Common myeloid progenitor, CD34-positive (primary cell): ENCODE measurements at regions of chr10 and their contacts with region 1.

Region 1: GRCh38 chr10:73625884-73626752 is 15.2 kb downstream of the MYOZ1 start:
- DNase-seq: peak; percentile 99
- H3K4me3 ChIP-seq: peak overlapping the region; percentile 68 to 98 (median 92)
- H3K27ac ChIP-seq: peak overlapping the region; percentile 96 to 99
- H3K4me1 ChIP-seq: peaks cover 8 to 18% (median 13%) of the 10 kb centered on the region in 4 experiments
- H3K27me3 ChIP-seq: no peaks in the 10 kb centered on the region

Region 2: DNA sequence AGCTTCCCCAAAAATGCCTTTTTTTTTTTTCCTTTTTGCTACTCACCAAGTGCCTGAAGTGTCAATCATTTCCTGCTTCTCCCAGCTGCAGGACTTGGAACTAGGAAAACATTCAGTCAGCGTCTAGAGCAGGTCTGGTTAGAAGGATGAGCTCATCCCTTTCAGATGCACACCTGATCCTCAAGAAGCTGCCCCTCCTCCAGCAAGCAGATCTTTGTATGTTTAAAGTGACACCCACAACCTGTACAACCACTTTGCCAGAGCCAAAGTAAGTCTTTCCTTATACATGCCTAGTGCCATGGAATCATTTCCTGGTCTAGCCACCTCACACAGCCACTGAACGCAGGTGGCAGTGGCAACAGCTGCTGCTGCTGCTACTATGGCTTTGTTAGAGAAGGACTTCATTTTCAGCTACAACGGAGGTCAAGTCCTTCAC is 24.6 kb before region 1 on chr10:
- CTCF ChIA-PET with region 1: no interaction called
- POLR2A ChIA-PET with region 1: no interaction called
- DNase-seq: no peak
- H3K4me3 ChIP-seq: no peak overlapping the region
- H3K27ac ChIP-seq: no peak overlapping the region
- H3K4me1 ChIP-seq: peaks cover 0 to 6% (median 0%) of the 10 kb centered on the region in 4 experiments
- H3K27me3 ChIP-seq: no peaks in the 10 kb centered on the region

Region 3: GRCh38 chr10:73644015-73644743 is 18.1 kb after region 1 on chr10:
- CTCF ChIA-PET with region 1: interaction called, 19 read pairs
- POLR2A ChIA-PET with region 1: no interaction called
- DNase-seq: peak; percentile 74 to 80 (median 75)
- H3K4me3 ChIP-seq: peak overlapping the region in 4 of 7 experiments; percentile 4 to 70 (median 34)
- H3K27ac ChIP-seq: no peak overlapping the region
- H3K4me1 ChIP-seq: peaks cover 0 to 34% (median 18%) of the 10 kb centered on the region in 4 experiments
- H3K27me3 ChIP-seq: no peaks in the 10 kb centered on the region

Region 4: GRCh38 chr10:73717556-73717955 is 91.4 kb after region 1 on chr10:
- CTCF ChIA-PET with region 1: no interaction called
- POLR2A ChIA-PET with region 1: no interaction called
- DNase-seq: peak; percentile 34 to 75 (median 71)
- H3K4me3 ChIP-seq: peak overlapping the region in 2 of 7 experiments; percentile 14 to 37
- H3K27ac ChIP-seq: peak overlapping the region; percentile 62 to 77
- H3K4me1 ChIP-seq: peaks cover 3 to 11% (median 4%) of the 10 kb centered on the region in 4 experiments
- H3K27me3 ChIP-seq: no peaks in the 10 kb centered on the region

Region 5: GRCh38 chr10:74145133-74145532 is 519.0 kb after region 1 on chr10:
- CTCF ChIA-PET with region 1: no interaction called
- POLR2A ChIA-PET with region 1: no interaction called
- DNase-seq: no peak
- H3K4me3 ChIP-seq: no peak overlapping the region
- H3K27ac ChIP-seq: no peak overlapping the region
- H3K4me1 ChIP-seq: peaks cover 7 to 8% (median 8%) of the 10 kb centered on the region in 4 experiments
- H3K27me3 ChIP-seq: no peaks in the 10 kb centered on the region